ENCODE measurements at regions of chr17 and their contacts with region 1.

Region 1: GRCh38 chr17:16589097-16589969 is 20.3 kb upstream of the ZNF287 start:
- DNase-seq: peak; percentile 87
- H3K4me3 ChIP-seq: peak overlapping the region; percentile 34 to 50 (median 35)
- H3K27ac ChIP-seq: no peak overlapping the region
- H3K4me1 ChIP-seq: peaks cover 4% of the 10 kb centered on the region
- H3K27me3 ChIP-seq: peaks cover 23 to 31% of the 10 kb centered on the region in 2 experiments
- CTCF ChIP-seq: peak; percentile 96 to 100
- POLR2A ChIP-seq: no peak

Region 2: GRCh38 chr17:16568541-16569357 is 20.6 kb before region 1 on chr17 and contains the start of gene ZNF287:
- CTCF ChIA-PET with region 1: interaction called, 11 read pairs
- POLR2A ChIA-PET with region 1: no interaction called
- dilution Hi-C with region 1: no loop called
- intact Hi-C with region 1: no loop called
- DNase-seq: peak; percentile 86
- H3K4me3 ChIP-seq: peak within 1 kb of the TSS; percentile 40 to 61 (median 51)
- H3K27ac ChIP-seq: no peak within 1 kb of the TSS
- H3K4me1 ChIP-seq: peaks cover 4% of the 10 kb centered on the region
- H3K27me3 ChIP-seq: peaks cover 0 to 5% of the 10 kb centered on the region in 2 experiments
- CTCF ChIP-seq: no peak
- POLR2A ChIP-seq: peak; percentile 54
- total RNA-seq, gene ZNF287: 5.5 and 6.9 TPM in 2 replicates

Region 3: GRCh38 chr17:16639438-16639837 is 50.1 kb after region 1 on chr17:
- CTCF ChIA-PET with region 1: no interaction called
- POLR2A ChIA-PET with region 1: no interaction called
- dilution Hi-C with region 1: no loop called
- intact Hi-C with region 1: no loop called
- DNase-seq: no peak
- H3K4me3 ChIP-seq: no peak overlapping the region
- H3K27ac ChIP-seq: no peak overlapping the region
- H3K4me1 ChIP-seq: no peaks in the 10 kb centered on the region
- H3K27me3 ChIP-seq: no peaks in the 10 kb centered on the region
- CTCF ChIP-seq: no peak
- POLR2A ChIP-seq: no peak

Region 4: DNA sequence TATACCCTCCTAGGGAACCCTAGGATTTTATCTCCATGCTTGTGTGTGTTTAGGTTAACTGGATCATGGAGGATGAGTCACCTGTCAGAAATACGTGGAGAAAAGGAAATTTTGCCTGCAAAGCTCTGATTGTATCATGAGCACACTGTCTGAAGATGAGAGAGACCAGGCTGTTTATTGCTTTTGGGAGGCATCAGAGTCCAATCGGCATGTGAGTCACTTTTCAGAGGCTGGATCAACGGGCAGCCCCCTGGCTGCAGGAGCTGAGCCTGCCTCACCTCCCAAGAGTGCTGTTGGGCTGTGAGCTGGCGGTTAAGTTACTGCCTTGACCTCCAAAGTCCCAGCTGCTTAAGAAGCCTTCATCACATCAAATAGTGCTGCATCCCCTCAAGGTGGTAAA is 846.0 kb after region 1 on chr17:
- CTCF ChIA-PET with region 1: no interaction called
- POLR2A ChIA-PET with region 1: no interaction called
- dilution Hi-C with region 1: no loop called
- intact Hi-C with region 1: no loop called
- DNase-seq: peak; percentile 45
- H3K4me3 ChIP-seq: no peak overlapping the region
- H3K27ac ChIP-seq: no peak overlapping the region
- H3K4me1 ChIP-seq: peaks cover 12% of the 10 kb centered on the region
- H3K27me3 ChIP-seq: peaks cover 0 to 4% of the 10 kb centered on the region in 2 experiments
- CTCF ChIP-seq: peak; percentile 14 to 24
- POLR2A ChIP-seq: no peak